ENCODE measurements at regions of chr1 and their contacts with region 1.

Region 1: GRCh38 chr1:21100481-21100921 is 76.2 kb downstream of the EIF4G3 start:
- DNase-seq: no peak
- ATAC-seq: peak in 4 of 8 donors; percentile 37 to 70 (median 56)
- H3K4me3 ChIP-seq: no peak overlapping the region
- H3K27ac ChIP-seq: peak overlapping the region in 1 of 10 donors; percentile 81
- H3K4me1 ChIP-seq: peaks cover 0 to 39% (median 4%) of the 10 kb centered on the region in 9 donors
- H3K27me3 ChIP-seq: no peaks in the 10 kb centered on the region
- CTCF ChIP-seq: no peak

Region 2: DNA sequence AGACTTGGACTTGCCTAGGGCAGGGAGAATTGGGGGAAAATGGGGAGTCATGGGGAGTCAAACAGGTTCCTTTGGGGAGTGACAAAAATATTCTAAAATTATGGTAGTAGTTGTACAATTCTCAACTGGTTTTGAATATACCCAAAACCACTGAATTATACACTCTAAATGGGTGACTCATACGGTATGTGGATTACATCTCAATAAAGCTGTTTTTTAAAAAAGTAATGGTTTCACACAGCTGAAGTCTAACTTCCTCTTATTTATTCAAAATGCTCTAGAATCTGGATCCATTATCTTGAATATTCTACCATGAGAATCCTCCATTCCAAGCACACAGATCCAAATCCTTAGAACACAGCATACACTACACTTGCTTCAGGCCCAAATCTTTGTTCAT is 65.1 kb after region 1 on chr1:
- intact Hi-C with region 1: loop called in 1 of 10 experiments (anchors 10 kb)
- DNase-seq: no peak
- ATAC-seq: no peak
- H3K4me3 ChIP-seq: no peak overlapping the region
- H3K27ac ChIP-seq: peak overlapping the region in 1 of 10 donors; percentile 1
- H3K4me1 ChIP-seq: peaks cover 0 to 19% (median 3%) of the 10 kb centered on the region in 9 donors
- H3K27me3 ChIP-seq: no peaks in the 10 kb centered on the region
- CTCF ChIP-seq: no peak